Tibial artery (tissue), 4 donors: ENCODE measurements at regions of chr10 and their contacts with region 1.

Region 1: GRCh38 chr10:79242620-79243152 is 104.6 kb upstream of the PPIF start:
- DNase-seq: peak; percentile 69 to 88
- H3K4me3 ChIP-seq: peak overlapping the region; percentile 53 to 59
- H3K27ac ChIP-seq: peak overlapping the region; percentile 96 to 97
- H3K4me1 ChIP-seq: peaks cover 11 to 87% (median 50%) of the 10 kb centered on the region in 4 donors
- H3K27me3 ChIP-seq: no peaks in the 10 kb centered on the region
- CTCF ChIP-seq: no peak

Region 2: DNA sequence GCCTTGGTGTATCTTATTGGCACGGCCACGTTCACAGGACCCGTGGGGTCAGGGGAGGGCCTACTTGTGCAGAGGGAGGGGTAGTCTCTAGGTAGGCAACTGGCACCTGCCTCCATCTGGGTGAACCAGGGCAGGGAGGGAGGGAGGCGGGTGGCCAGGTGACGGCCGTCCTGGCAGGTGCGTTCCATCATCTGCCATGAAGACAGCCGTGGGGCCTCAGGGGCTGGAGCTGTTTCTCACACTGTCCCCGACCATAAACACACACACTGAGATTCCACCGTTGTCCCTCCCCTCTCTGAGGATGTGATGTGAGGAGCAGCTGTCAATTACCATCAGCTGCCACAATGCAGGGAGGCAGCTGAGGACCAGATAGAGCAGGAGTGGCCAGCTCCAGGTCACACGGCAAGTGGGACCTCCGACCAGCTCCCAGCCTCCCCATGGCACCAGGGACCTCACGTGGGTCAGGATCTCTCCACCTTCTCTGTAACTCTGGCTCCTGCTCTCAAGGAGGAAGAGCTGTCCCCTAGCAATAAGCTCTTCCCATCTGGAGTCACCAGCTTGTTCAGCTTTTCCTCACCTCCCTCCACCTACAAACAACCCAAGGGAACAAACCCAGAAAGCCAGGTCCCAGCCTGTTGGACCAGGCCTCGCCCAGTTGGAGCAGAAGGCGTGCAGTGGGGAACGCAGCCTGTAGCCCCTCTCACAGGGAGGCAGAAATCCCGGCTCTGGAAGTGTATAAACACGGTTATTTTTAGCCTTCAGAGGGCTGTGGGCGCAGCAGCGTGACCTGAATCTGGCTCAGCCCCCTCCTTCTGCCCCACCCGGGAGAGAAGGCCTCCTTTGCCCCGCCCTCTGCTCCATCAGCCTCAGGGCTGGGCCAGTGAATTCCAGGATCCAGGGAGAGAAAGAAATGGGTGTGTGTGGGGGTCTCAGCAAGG is 140.9 kb before region 1 on chr10:
- intact Hi-C with region 1: no loop called
- DNase-seq: peak; percentile 80 to 91
- H3K4me3 ChIP-seq: peak overlapping the region in 1 of 2 donors; percentile 2
- H3K27ac ChIP-seq: peak overlapping the region; percentile 77 to 82
- H3K4me1 ChIP-seq: peaks cover 8 to 93% (median 74%) of the 10 kb centered on the region in 4 donors
- H3K27me3 ChIP-seq: no peaks in the 10 kb centered on the region
- CTCF ChIP-seq: no peak

Region 3: GRCh38 chr10:79149662-79150443 is 92.8 kb before region 1 on chr10:
- intact Hi-C with region 1: loop called (anchors 10 kb)
- DNase-seq: peak; percentile 85 to 89
- H3K4me3 ChIP-seq: no peak overlapping the region
- H3K27ac ChIP-seq: peak overlapping the region; percentile 79 to 80
- H3K4me1 ChIP-seq: peaks cover 8 to 100% (median 93%) of the 10 kb centered on the region in 4 donors
- H3K27me3 ChIP-seq: no peaks in the 10 kb centered on the region
- CTCF ChIP-seq: no peak

Region 4: GRCh38 chr10:79274279-79275104 is 31.8 kb after region 1 on chr10:
- intact Hi-C with region 1: loop called (anchors 1 kb)
- DNase-seq: peak; percentile 90 to 98
- H3K4me3 ChIP-seq: peak overlapping the region in 1 of 2 donors; percentile 5
- H3K27ac ChIP-seq: peak overlapping the region; percentile 71 to 87
- H3K4me1 ChIP-seq: peaks cover 0 to 49% (median 33%) of the 10 kb centered on the region in 4 donors
- H3K27me3 ChIP-seq: no peaks in the 10 kb centered on the region
- CTCF ChIP-seq: peak; percentile 42 to 51